Right cardiac atrium (tissue), 5 donors: ENCODE measurements at regions of chr14 and their contacts with region 1.

Region 1: GRCh38 chr14:102917469-102918211 is 4.8 kb upstream of the AMN start:
- DNase-seq: peak; percentile 54 to 87 (median 80)
- ATAC-seq: peak in 1 of 2 donors; percentile 30
- H3K4me3 ChIP-seq: no peak overlapping the region
- H3K27ac ChIP-seq: no peak overlapping the region
- H3K4me1 ChIP-seq: no peaks in the 10 kb centered on the region
- H3K27me3 ChIP-seq: no peaks in the 10 kb centered on the region

Region 2: GRCh38 chr14:102565331-102565887 is 352.2 kb before region 1 on chr14:
- intact Hi-C with region 1: no loop called
- DNase-seq: peak in 1 of 3 donors; percentile 45
- ATAC-seq: peak in 1 of 2 donors; percentile 47
- H3K4me3 ChIP-seq: no peak overlapping the region
- H3K27ac ChIP-seq: no peak overlapping the region
- H3K4me1 ChIP-seq: no peaks in the 10 kb centered on the region
- H3K27me3 ChIP-seq: no peaks in the 10 kb centered on the region

Region 3: DNA sequence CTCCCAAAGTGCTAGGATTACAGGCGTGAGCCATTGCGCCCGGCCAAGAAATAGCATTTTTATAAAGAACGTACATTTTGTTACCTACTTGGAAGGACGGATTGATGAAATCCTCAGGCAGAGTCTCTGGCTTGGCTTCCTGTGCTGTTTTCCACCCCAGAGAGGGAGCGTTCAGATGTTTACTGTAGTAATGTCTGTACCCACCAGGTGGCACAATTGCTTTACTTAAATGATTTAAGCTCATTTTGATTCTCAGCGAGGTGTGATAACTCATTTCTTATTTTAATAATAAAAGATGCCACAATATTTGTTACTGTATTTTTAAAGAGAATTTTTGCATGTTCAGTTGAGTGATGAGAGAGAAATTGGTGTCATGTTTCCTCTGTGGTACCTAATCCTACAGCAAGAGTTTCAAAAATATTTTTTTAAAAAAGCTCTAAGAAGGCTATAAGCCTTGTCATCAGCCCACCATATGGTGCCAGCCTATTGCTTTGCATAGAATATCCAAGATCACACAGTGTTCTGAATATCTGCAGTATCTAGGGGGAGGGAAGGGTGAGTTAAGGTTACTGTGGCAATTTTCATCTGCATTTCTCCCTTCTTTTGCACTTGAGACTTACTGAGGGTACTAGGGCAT is 223.0 kb before region 1 on chr14:
- intact Hi-C with region 1: loop called (anchors 5 to 10 kb)
- DNase-seq: peak in 2 of 3 donors; percentile 24 to 54
- ATAC-seq: peak; percentile 60 to 77
- H3K4me3 ChIP-seq: no peak overlapping the region
- H3K27ac ChIP-seq: no peak overlapping the region
- H3K4me1 ChIP-seq: peaks cover 9% of the 10 kb centered on the region
- H3K27me3 ChIP-seq: no peaks in the 10 kb centered on the region

Region 4: GRCh38 chr14:102774391-102775153 is 143.1 kb before region 1 on chr14:
- intact Hi-C with region 1: loop called in 3 of 4 experiments (anchors 10 kb)
- DNase-seq: peak in 2 of 3 donors; percentile 32 to 57
- ATAC-seq: peak; percentile 62 to 63
- H3K4me3 ChIP-seq: no peak overlapping the region
- H3K27ac ChIP-seq: no peak overlapping the region
- H3K4me1 ChIP-seq: no peaks in the 10 kb centered on the region
- H3K27me3 ChIP-seq: no peaks in the 10 kb centered on the region